ENCODE measurements at regions of chr6 and their contacts with region 1.

Region 1: DNA sequence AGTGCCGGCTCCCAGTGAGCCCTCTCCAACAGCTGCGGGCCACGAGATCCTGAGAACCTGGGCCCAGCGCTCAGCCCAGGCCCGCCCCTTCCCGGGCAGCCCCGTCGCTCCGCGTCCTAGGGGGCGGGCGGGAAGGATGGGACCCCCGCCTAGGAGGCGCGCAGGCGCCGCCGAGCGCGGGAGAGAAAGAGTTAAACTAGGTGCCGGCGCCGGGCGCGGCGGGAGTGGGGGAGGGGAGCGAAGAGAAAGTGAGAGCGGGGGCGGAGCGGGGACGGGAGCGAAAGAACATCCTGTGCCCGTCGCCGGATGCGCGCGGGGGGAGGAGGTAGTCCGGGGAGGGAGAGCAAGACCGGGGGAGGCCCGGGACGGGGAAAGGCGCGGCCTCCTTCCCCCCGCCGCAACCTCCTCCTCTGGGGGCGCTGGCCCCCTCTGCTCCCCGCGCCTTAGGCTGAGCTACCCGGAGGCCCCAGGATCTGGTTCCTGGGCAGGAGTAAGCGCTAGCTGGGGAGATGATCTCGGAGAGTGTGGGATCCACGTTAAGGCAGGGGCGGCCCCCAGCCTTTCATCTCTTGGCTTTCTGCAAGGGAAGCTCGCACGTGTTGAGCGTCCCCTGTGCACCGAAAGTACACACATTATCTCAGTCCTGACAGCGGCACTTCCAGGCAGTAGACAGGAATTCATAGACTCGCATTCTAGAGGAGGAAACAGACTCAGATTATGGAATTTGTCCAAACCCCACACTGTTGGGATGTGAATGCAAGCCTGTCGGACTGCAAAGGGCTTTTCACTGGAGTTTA is 4.9 kb upstream of the ARMC12 start:
- DNase-seq: peak; percentile 97
- H3K4me3 Mint-ChIP-seq: peak overlapping the region; percentile 81
- H3K27ac Mint-ChIP-seq: peak overlapping the region; percentile 89
- H3K4me1 Mint-ChIP-seq: peaks cover 78% of the 10 kb centered on the region
- H3K27me3 Mint-ChIP-seq: no peaks in the 10 kb centered on the region

Region 2: DNA sequence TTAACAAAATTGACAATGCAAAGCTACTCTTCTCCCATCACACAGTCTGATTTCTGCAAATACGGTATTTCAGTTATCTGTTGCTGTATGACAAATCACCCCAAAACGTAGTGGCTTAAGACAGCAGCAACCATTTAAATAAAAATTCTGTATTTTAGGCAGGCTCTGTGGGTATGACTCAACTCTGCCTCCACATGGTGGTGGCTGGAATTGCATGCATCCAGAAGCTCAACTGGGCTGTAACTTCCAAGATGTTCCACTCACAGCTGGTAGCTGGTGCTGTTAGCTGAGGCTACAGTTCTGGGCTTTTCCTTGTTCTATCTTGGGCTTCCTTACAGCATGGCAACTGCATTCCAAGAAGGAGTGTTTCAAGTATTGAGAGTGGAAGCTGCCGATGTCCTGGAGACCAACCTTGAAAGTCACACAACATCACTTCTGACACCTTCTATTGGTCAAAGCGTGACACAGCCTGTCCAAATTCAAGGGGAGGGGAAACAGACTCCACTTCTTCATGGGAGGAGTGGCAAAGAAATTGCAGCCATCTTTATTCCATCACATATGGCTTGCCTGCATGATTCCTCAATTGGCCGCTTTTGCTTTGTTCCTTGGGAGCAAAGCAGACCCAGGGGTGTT is 179.5 kb before region 1 on chr6:
- CTCF ChIA-PET with region 1: interaction called, 14 read pairs
- POLR2A ChIA-PET with region 1: no interaction called
- intact Hi-C with region 1: no loop called
- DNase-seq: peak; percentile 78
- H3K4me3 Mint-ChIP-seq: no peak overlapping the region
- H3K27ac Mint-ChIP-seq: no peak overlapping the region
- H3K4me1 Mint-ChIP-seq: no peaks in the 10 kb centered on the region
- H3K27me3 Mint-ChIP-seq: peaks cover 6% of the 10 kb centered on the region

Region 3: DNA sequence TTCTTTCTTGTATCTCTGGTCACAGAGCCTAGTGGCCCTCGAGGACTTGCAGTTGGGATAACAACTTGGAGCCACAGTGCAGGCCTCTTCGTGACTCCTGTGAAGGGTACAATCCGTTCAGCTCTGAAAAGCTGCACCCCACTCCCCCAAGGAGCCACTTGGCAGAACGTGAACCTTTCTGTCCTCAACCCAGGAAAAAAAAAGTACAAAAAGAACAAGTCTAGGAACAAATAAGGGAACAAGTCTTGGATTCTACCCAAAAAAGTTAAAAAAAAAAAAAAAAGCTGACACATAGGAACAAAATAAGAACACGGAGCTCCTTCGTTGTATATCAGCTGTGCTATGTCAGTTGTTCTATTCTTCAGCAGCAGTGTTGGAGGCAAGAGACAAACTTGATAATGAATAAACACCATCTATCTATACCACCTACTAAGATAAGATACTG is 141.3 kb before region 1 on chr6:
- CTCF ChIA-PET with region 1: interaction called, 210 read pairs
- POLR2A ChIA-PET with region 1: no interaction called
- intact Hi-C with region 1: no loop called
- DNase-seq: no peak
- H3K4me3 Mint-ChIP-seq: no peak overlapping the region
- H3K27ac Mint-ChIP-seq: no peak overlapping the region
- H3K4me1 Mint-ChIP-seq: peaks cover 73% of the 10 kb centered on the region
- H3K27me3 Mint-ChIP-seq: no peaks in the 10 kb centered on the region

Region 4: GRCh38 chr6:35629876-35630378 is 102.0 kb before region 1 on chr6:
- CTCF ChIA-PET with region 1: interaction called, 53 read pairs
- POLR2A ChIA-PET with region 1: no interaction called
- intact Hi-C with region 1: no loop called
- DNase-seq: no peak
- H3K4me3 Mint-ChIP-seq: no peak overlapping the region
- H3K27ac Mint-ChIP-seq: peak overlapping the region; percentile 47
- H3K4me1 Mint-ChIP-seq: peaks cover 15% of the 10 kb centered on the region
- H3K27me3 Mint-ChIP-seq: no peaks in the 10 kb centered on the region

Region 5: DNA sequence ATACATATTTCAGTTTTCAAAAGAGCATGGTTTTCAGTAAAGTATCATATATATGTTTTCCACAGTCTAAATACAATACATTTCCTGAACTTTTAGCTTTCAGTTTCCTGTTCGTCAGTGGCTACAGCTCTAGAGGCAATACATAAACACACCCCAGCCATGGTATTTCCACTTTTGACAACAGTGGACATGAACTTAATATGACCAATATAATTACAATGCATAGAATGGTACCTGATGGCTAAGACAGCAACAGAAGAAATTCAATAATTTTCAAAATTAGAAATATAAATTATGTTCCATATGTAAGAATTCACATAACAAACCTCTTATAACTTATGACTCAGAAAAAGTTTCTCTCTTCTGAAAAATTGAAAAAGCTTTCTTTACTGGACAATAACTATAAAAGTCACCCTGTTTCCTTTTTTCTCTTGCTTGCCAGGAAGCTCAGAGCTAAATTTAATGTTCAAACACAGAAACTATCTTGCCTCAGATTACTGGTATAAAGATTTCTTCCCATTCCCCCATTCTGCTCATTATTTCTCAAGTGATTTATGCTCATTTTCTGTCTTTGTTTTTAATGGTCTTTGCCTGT is 62.4 kb before region 1 on chr6:
- CTCF ChIA-PET with region 1: interaction called, 20 read pairs
- POLR2A ChIA-PET with region 1: interaction called, 6 read pairs
- intact Hi-C with region 1: loop called (anchors 2 kb)
- DNase-seq: no peak
- H3K4me3 Mint-ChIP-seq: peak overlapping the region; percentile 43
- H3K27ac Mint-ChIP-seq: peak overlapping the region; percentile 92
- H3K4me1 Mint-ChIP-seq: peaks cover 49% of the 10 kb centered on the region
- H3K27me3 Mint-ChIP-seq: no peaks in the 10 kb centered on the region

Region 6: GRCh38 chr6:35719830-35720733 is 11.9 kb before region 1 on chr6:
- CTCF ChIA-PET with region 1: interaction called, 42 read pairs
- POLR2A ChIA-PET with region 1: interaction called, 11 read pairs
- intact Hi-C with region 1: loop called (anchors 1 kb)
- DNase-seq: peak; percentile 60
- H3K4me3 Mint-ChIP-seq: peak overlapping the region; percentile 52
- H3K27ac Mint-ChIP-seq: peak overlapping the region; percentile 86
- H3K4me1 Mint-ChIP-seq: peaks cover 71% of the 10 kb centered on the region
- H3K27me3 Mint-ChIP-seq: no peaks in the 10 kb centered on the region

Region 7: GRCh38 chr6:35771343-35771627 is 39.4 kb after region 1 on chr6:
- CTCF ChIA-PET with region 1: no interaction called
- POLR2A ChIA-PET with region 1: no interaction called
- intact Hi-C with region 1: no loop called
- DNase-seq: no peak
- H3K4me3 Mint-ChIP-seq: no peak overlapping the region
- H3K27ac Mint-ChIP-seq: no peak overlapping the region
- H3K4me1 Mint-ChIP-seq: no peaks in the 10 kb centered on the region
- H3K27me3 Mint-ChIP-seq: peaks cover 15% of the 10 kb centered on the region

Region 8: GRCh38 chr6:36368921-36369865 is 637.3 kb after region 1 on chr6:
- CTCF ChIA-PET with region 1: no interaction called
- POLR2A ChIA-PET with region 1: no interaction called
- intact Hi-C with region 1: no loop called
- DNase-seq: no peak
- H3K4me3 Mint-ChIP-seq: no peak overlapping the region
- H3K27ac Mint-ChIP-seq: no peak overlapping the region
- H3K4me1 Mint-ChIP-seq: peaks cover 5% of the 10 kb centered on the region
- H3K27me3 Mint-ChIP-seq: no peaks in the 10 kb centered on the region

Region 9: GRCh38 chr6:36383606-36384005 is 651.7 kb after region 1 on chr6:
- CTCF ChIA-PET with region 1: no interaction called
- POLR2A ChIA-PET with region 1: no interaction called
- intact Hi-C with region 1: no loop called
- DNase-seq: peak; percentile 61
- H3K4me3 Mint-ChIP-seq: no peak overlapping the region
- H3K27ac Mint-ChIP-seq: peak overlapping the region; percentile 81
- H3K4me1 Mint-ChIP-seq: peaks cover 62% of the 10 kb centered on the region
- H3K27me3 Mint-ChIP-seq: peaks cover 9% of the 10 kb centered on the region

Measured in activated CD4-positive, alpha-beta memory T cell treated with anti-CD3 and anti-CD28 coated beads for 36 hours (primary cell).